ENCODE measurements at regions of chr14 and their contacts with region 1.

Region 1: DNA sequence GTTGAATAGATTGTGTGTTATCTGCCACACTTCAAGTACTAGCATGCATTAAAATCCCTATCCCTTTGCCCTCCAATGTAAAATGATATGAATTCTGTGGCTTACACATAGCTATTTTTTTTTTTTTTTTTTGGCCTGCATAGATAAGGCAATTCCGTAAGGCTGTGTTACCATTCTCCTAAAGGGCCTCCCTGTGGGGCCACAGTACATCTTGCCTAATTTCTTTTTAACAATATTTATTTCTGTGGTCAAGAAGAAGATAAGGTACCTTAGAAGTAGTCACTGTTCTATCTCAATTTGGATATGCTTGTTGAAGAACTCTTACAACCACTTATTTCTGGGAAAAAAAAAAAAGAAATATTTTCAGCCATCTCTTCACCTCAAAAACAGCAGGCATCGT is 19.8 kb downstream of the FLRT2 start:
- DNase-seq: no peak
- ATAC-seq: no peak
- H3K4me3 ChIP-seq: no peak overlapping the region
- H3K4me3 Mint-ChIP-seq: no peak overlapping the region
- H3K27ac ChIP-seq: no peak overlapping the region
- H3K27ac Mint-ChIP-seq: no peak overlapping the region
- H3K4me1 ChIP-seq: no peaks in the 10 kb centered on the region
- H3K4me1 Mint-ChIP-seq: no peaks in the 10 kb centered on the region
- H3K27me3 ChIP-seq: no peaks in the 10 kb centered on the region
- H3K27me3 Mint-ChIP-seq: peaks cover 0 to 5% (median 0%) of the 10 kb centered on the region in 5 donors

Region 2: DNA sequence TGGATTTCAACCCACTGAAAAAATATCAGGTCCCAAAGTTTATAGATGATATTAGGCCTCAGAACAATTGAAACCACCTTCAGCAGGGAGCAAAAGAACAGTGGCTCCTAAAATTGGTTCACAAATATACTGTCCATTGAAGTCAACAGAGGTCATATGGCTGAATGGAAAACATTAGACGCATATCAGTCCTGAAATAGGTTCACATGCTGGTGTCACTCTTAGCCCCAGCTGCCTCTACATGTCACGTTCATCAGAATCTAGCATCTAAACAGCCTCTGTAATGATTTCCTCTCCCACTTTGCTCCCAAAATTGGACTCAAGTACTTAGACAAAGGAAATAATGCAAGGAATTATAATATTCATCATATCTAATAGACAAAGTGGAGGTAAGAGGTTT is 11.1 kb before region 1 on chr14:
- CTCF ChIA-PET with region 1: no interaction called
- POLR2A ChIA-PET with region 1: no interaction called
- intact Hi-C with region 1: loop called in 1 of 2 experiments (anchors 1 kb)
- DNase-seq: no peak
- ATAC-seq: no peak
- H3K4me3 ChIP-seq: no peak overlapping the region
- H3K4me3 Mint-ChIP-seq: no peak overlapping the region
- H3K27ac ChIP-seq: no peak overlapping the region
- H3K27ac Mint-ChIP-seq: no peak overlapping the region
- H3K4me1 ChIP-seq: no peaks in the 10 kb centered on the region
- H3K4me1 Mint-ChIP-seq: peaks cover 0 to 5% (median 0%) of the 10 kb centered on the region in 7 donors
- H3K27me3 ChIP-seq: no peaks in the 10 kb centered on the region
- H3K27me3 Mint-ChIP-seq: peaks cover 19 to 45% (median 34%) of the 10 kb centered on the region in 5 donors

Region 3: DNA sequence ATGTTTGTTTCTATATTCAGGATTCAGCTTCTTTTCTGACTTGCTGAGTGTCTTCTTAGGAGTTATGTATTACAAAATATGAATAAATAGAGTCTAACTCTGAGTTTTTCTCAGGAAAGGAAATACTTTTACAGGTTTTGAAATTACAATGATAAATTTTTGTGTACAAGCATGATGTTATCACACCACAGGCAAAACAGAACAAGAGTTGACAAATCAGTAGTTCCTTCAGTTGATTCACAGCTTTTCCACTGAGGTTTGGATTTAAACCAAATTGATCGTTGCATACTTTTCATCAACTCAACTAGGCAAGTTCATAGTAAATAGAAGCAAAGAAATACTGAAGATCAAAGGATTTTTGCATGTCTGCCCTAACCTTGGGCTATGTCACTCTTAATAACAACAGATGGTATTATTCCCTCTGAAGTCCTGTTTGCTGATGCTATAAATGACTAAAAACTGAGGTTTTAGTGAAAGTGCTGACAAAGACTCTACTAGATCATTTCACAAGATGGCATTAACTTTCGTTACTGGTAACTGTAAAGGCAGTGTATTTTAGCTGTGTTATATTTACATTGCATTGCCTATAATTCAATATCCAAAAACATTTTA is 500.5 kb after region 1 on chr14:
- CTCF ChIA-PET with region 1: no interaction called
- POLR2A ChIA-PET with region 1: no interaction called
- intact Hi-C with region 1: no loop called
- DNase-seq: no peak
- ATAC-seq: no peak
- H3K4me3 ChIP-seq: no peak overlapping the region
- H3K4me3 Mint-ChIP-seq: no peak overlapping the region
- H3K27ac ChIP-seq: no peak overlapping the region
- H3K27ac Mint-ChIP-seq: no peak overlapping the region
- H3K4me1 ChIP-seq: no peaks in the 10 kb centered on the region
- H3K4me1 Mint-ChIP-seq: peaks cover 0 to 11% (median 5%) of the 10 kb centered on the region in 7 donors
- H3K27me3 ChIP-seq: no peaks in the 10 kb centered on the region
- H3K27me3 Mint-ChIP-seq: no peaks in the 10 kb centered on the region

Measured in naive thymus-derived CD4-positive, alpha-beta T cell (primary cell).